ENCODE measurements at regions of chr1 and their contacts with region 1.

Region 1: GRCh38 chr1:30718636-30719405 is 4.6 kb downstream of the MATN1 start:
- DNase-seq: peak; percentile 87

Region 2: GRCh38 chr1:30707412-30708360 is 11.1 kb before region 1 on chr1:
- CTCF ChIA-PET with region 1: no interaction called
- POLR2A ChIA-PET with region 1: no interaction called
- DNase-seq: peak; percentile 92

Region 3: DNA sequence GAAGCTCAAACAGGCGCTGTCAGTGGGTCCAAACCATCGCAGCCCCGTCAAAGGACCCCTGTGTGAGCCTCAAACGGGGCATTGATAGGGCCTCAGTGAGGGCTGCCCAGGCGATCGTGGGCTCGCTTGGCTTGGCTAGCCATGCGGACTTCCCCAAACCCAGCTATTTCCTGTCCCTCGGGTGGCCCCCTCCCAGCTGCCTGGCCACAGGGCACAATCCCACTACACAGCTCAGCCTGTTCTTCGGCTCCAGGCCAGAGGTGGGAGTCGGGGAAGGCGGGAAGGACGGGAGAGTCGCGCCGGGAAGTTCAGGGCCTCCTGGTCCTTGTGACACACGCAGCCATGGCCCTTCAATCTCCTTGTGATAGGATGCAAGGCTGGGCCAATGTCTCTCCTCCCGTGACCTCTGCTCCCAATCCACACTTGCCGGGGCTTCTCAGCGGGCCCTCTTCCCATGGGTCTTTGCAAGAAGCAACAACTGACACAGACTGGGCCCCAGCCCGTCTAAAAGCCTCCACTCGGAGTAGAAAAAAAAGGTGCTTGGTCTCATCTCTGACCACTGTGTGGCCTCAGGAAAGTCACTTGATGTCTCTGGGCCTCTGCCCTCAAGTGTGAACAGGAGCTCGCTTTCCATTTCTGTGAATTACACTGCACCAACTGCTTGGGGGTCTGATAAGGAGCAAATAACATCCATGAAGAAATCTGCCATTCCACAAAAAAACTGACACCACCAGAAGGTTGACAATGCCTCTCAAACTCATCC is 11.7 kb after region 1 on chr1:
- CTCF ChIA-PET with region 1: interaction called, 11 read pairs
- POLR2A ChIA-PET with region 1: interaction called, 9 read pairs
- DNase-seq: no peak

Region 4: DNA sequence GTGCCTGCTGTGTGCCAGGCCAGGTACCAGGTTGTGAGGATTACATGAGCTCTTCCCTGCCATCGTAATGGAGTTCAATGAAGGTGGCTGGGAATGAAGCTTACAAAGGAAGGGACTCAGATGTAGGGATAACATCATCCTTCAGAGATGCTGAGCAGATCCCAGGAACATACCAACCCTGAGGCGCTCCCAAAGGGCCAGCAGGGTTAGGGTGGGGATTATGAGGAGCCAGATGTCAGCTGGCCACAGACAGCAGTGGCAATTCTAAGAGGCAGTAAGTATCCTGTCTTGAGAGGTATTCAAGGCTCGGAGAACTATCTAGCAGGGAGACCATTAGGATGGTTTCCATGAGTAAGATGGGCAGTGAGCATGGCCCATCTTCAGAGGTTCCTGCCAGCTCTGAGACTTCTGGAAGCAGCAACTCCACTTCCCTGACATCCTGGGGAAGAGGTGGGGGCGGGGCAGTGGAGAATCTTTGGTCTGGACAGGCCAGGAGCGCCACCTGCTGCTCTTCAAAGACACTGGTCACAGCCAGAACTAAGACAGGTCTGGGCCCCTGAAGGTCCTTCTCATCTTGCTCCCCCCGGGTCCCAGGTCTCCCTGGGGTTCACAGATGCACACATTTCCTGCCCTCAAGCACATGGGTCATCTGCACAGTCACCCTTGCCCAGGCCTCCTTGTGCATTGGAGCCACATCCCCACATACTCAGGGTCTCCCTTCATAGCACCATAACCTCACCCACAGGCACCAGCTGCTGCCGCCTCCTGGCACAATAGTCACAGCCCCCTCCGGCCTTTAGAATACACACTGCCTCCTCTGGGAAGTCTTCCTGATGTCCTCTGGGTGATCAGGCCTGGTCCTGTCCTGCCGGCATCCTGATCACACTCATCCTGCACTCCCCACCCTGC is 192.5 kb after region 1 on chr1:
- CTCF ChIA-PET with region 1: interaction called, 15 read pairs
- POLR2A ChIA-PET with region 1: interaction called, 3 read pairs
- DNase-seq: peak; percentile 94

Measured in HEK293T (cell line).